BJ (cell line): ENCODE measurements at regions of chr1 and their contacts with region 1.

Region 1: DNA sequence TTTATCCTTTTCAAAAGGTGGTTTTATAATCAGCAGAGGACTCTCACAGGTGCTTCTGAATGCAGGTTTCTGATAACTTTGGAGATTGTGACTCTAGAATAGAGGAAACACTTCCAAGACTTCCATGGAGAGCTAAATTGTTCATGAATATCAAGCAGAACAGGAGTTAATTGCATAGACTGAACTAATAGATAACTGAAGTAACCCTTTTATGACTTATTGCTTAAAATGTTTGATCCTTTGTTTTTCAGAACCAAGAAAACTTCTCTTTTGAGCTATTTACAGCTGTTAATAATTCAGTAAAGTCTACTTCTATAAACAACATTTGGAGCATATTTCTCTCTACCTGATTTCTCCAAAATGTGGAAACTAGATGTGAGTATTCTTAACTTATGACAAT is 19.9 kb downstream of the TEX46 start:
- DNase-seq: no peak
- H3K4me3 ChIP-seq: no peak overlapping the region
- H3K27me3 ChIP-seq: no peaks in the 10 kb centered on the region
- CTCF ChIP-seq: no peak

Region 2: GRCh38 chr1:22611530-22611947 is 384.2 kb before region 1 on chr1:
- CTCF ChIA-PET with region 1: no interaction called
- POLR2A ChIA-PET with region 1: interaction called, 10 read pairs
- DNase-seq: no peak
- H3K4me3 ChIP-seq: no peak overlapping the region
- H3K27me3 ChIP-seq: peaks cover 14% of the 10 kb centered on the region
- CTCF ChIP-seq: no peak

Region 3: DNA sequence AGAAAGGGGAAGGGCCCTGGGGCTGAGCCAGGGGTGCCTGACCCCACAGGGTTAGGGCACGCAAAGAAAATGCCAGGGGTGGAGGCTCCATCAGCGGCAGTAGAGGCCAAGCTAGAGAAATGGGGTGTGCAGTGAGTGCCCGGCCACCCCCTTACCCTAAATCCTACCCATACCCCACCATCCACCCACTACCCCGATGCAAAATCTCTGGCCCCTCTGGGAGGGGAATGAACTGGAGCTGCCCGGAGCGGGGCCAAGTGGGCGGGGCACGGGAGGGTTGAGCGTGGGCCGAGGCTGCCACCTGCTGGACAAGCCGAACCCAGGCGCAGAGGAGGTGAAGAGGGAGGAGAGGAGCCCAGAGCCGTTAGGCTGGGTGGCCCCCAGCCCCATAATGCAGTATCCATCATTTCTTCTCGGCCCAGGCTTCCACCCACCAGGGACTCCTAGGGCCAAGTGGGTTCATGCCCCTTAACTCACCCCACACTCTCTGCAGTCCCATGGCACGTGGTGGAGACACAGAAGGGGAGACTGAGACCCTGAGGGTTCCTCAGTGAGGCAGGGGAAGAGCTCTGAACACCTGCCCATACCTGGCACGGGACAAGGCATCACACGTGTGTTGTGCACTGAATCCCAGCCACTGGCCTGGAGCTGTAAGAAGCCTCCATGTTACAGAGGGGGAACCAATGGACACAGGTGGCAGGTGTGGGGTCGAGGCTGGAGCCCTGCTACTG is 353.7 kb before region 1 on chr1:
- CTCF ChIA-PET with region 1: no interaction called
- POLR2A ChIA-PET with region 1: no interaction called
- DNase-seq: no peak
- H3K4me3 ChIP-seq: no peak overlapping the region
- H3K27me3 ChIP-seq: 0 out of 2 replicates have a peak, but pooled peaks cover 2% of the 10 kb centered on the region
- CTCF ChIP-seq: peak; percentile 97

Region 4: DNA sequence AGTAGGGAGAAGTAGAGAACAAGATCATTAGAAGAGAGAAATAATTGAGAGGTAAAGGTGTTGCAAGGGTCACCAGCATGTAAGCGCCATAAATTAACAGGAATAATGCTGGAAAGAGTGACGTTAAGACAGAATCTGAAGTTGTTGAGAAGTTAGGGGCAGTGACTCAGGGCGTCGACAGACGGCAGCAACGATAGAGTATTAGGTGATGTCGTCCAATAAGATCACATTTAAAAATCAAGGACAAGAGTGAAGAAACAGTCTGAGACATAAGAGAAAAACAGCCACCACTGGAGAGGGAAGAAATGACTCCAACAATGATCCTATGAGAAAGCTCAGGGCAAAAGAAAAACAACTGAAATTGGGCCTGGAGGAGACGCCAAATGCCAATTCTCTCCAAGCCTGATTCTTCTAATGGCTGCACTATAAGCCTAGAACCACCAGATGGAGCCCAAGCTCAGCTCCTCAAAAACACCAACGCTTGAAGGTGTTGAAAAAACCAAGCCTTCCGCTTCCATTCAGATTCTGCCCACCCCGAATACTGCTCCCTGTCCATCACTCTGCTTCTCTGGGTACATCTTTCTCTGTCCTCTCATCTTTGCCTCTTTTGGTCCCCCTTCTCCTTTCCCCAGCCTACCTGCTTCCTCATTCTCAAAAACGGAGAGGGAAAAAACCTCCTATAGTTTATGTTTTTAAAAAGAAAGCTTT is 102.8 kb after region 1 on chr1:
- CTCF ChIA-PET with region 1: no interaction called
- POLR2A ChIA-PET with region 1: no interaction called
- DNase-seq: no peak
- H3K4me3 ChIP-seq: no peak overlapping the region
- H3K27me3 ChIP-seq: no peaks in the 10 kb centered on the region
- CTCF ChIP-seq: peak; percentile 92